PC-9 (cell line): ENCODE measurements at regions of chr6 and their contacts with region 1.

Region 1: DNA sequence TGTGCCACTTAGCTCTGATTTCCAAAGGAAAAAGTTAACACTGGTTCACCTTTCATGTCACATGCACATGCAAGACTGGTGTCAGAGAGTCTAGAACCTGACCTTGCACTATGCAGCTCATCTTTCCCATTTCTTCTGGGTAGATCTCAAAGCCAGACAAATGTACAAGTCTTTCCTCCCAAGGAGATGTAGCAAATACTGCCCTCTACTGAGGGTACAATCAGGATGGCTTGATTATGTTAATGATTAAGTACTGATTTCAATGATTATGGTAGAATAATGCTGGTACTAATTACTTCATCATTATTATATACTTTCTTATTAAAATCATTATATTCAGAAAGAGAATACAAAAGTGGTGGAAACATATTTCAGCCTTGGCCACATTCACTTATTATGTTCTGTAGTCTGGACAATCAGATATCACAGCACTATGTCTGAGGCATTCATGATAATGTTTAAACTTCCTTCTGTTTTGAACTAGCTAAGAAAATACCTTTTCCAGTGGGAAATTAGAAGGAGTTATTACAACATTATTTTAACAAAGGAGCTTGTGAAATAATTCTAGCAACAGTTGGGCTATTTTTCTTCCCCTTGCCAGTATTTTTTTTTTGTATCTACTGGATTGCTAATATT is 68.5 kb upstream of the FOXO3 start:
- DNase-seq: peak; percentile 1 to 53
- H3K4me3 ChIP-seq: no peak overlapping the region
- H3K27ac ChIP-seq: no peak overlapping the region
- H3K4me1 ChIP-seq: no peaks in the 10 kb centered on the region
- H3K27me3 ChIP-seq: no peaks in the 10 kb centered on the region
- CTCF ChIP-seq: peak; percentile 87

Region 2: DNA sequence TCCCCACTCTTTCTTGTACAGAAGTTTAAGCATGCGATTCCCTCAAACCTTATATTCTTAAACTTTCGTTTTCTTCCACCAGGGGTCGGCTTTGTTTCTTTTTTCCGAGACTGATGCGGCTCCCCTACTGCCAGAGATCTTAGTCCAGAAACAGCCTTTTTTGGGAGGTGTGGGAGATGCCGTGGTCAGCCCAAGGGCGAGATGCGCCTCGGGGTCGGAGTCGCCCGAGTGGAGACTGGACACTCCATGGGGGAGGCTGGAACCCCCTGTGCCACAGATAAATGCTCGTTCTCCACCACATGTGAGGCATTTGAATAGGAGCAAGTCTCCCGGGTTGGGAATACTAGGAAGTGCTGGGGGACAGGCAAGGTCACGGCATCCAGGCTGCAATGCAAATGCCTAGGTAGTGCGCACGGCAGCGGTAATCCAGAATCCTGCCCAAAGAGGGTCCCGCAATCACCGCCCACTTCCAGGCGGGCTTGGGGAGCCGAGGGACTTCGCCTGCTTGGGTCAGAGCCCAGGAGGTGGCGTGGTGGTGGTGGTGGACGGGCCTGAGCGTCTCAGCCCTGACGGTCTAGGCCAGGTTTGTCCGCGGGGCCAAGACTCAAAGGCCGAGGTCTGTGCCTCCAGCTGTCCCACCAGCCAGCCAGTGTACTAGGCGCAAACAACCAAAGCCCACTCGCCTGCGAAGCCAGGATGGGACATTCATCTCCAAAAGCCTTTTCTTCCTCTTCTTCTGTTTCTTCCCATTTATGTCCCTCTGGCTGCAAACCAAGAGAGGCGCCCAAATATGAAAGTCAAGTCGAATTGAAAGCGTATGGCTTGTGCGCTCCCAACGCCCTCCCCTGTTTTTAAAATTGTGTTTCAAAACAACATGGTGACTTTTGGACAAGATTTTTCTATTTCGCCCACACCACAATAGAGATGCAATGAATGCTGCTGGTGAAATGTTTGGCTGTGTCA is 378.4 kb before region 1 on chr6:
- CTCF ChIA-PET with region 1: interaction called, 6 read pairs
- POLR2A ChIA-PET with region 1: no interaction called
- intact Hi-C with region 1: loop called (anchors 1 kb)
- DNase-seq: peak; percentile 23 to 59
- H3K4me3 ChIP-seq: 0 out of 2 replicates have a peak overlapping the region, but pooled peaks have one; percentile 8
- H3K27ac ChIP-seq: no peak overlapping the region
- H3K4me1 ChIP-seq: no peaks in the 10 kb centered on the region
- H3K27me3 ChIP-seq: peaks cover 5% of the 10 kb centered on the region; the same call in 1 of the 2 replicates
- CTCF ChIP-seq: peak; percentile 87

Region 3: GRCh38 chr6:108174371-108175175 is 317.7 kb before region 1 on chr6:
- CTCF ChIA-PET with region 1: interaction called, 4 read pairs
- POLR2A ChIA-PET with region 1: no interaction called
- intact Hi-C with region 1: loop called (anchors 2 kb)
- DNase-seq: no peak
- H3K4me3 ChIP-seq: no peak overlapping the region
- H3K27ac ChIP-seq: no peak overlapping the region
- H3K4me1 ChIP-seq: no peaks in the 10 kb centered on the region
- H3K27me3 ChIP-seq: no peaks in the 10 kb centered on the region
- CTCF ChIP-seq: no peak